Activated T-helper 2 cell treated with anti-CD3 and anti-CD28 coated beads, Interferon-gamma antibody, Interleukin-2, Interleukin-4, amounts not matched to agents 10 μg/mL and 5 μg/mL and 100 μg/mL, durations not matched to agents 14 hours and 24 hours and 36 hours (primary cell): ENCODE measurements at regions of chr1 and their contacts with region 1.

Region 1: DNA sequence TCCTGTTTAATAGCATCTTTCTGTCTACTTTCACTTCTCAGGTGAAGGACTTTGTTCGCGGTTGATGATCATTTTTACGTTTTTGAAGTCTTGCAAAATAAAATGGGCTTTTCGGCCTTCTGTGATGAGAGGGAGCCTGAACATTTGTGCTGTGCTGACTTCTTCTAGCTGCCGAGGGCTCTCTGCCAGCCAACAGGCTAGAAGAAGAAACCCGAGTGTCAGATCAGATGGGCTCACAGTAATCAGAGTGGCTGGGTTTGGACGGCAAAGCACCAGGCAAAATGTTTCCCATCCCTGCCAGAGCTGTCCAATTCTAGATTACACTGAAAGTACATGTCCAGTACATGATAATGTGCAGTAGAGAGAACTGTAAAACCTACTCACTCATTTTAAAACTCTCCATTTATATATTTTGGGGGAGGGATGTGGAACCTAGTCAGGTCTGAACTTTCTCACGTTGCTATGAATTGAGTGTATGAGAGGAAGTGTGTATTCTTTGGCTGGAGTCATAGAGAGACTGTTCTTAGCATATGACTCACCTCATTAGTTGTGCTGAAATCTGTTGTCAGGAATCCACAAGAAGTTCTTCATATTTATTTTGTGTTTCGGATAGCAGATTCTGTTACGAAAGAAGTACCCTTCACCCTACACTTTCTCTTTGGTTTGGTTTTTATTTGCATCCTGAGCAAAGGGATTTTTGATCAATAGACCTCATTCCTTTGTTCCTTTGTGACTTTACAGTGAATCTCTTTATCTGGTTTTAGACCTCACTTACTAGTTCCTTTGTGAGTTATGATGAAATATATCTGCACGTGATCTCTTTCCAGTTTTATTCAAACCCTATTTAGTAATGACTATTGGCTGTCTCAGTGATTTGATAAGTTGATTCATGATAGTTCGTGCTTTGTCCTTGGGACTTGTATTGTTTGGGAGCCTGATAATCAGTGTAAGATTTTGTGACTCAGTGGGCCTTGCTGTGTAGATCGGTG is 4.8 kb downstream of the ATP1A1 start:
- DNase-seq: peak; percentile 28
- H3K4me3 Mint-ChIP-seq: peak overlapping the region; percentile 78
- H3K27ac Mint-ChIP-seq: peak overlapping the region; percentile 75
- H3K4me1 Mint-ChIP-seq: peaks cover 66% of the 10 kb centered on the region
- H3K27me3 Mint-ChIP-seq: no peaks in the 10 kb centered on the region

Region 2: DNA sequence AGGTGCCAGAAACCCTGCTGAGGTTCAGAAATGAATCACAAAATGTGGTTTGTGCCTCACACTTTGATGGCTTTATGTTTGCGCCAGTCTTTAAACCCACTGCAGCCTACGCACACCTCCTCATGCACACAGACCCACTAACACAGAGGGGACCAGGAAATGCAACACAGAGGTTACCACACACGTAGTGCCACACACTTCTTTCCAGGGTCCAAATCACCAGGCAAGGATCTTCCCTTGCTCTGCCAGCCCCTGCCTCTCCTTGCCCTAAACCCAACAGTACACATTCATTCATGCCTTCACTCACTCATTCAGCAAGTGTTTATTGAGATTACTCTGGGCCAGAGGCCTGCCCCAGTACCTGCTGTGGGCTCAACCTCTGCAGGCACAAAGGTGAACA is 249.2 kb before region 1 on chr1:
- intact Hi-C with region 1: loop called (anchors 5 kb)
- DNase-seq: no peak
- H3K4me3 Mint-ChIP-seq: no peak overlapping the region
- H3K27ac Mint-ChIP-seq: peak overlapping the region; percentile 38
- H3K4me1 Mint-ChIP-seq: peaks cover 38% of the 10 kb centered on the region
- H3K27me3 Mint-ChIP-seq: peaks cover 17% of the 10 kb centered on the region

Region 3: DNA sequence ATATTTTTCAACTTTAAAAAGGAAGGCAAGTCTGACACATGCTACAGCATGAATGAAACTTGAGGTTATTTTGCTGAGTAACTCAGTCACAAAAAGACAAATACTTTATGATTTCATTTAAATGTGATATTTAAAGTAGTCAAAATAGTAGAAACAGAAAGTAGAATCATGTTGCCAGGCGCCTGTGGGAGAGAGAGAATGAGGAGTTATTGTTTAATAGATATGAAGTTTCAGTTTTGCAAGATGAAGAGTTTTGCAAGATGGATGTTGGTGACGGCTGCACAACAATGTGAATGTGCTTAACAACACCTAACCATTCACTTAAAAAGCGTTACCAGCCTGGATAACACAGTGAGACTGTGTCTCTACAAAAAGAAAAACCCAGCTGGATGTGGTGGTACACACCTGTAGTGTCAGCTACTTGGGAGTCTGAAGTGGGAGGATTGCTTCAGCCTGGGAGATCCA is 25.5 kb before region 1 on chr1:
- intact Hi-C with region 1: no loop called
- DNase-seq: no peak
- H3K4me3 Mint-ChIP-seq: no peak overlapping the region
- H3K27ac Mint-ChIP-seq: no peak overlapping the region
- H3K4me1 Mint-ChIP-seq: peaks cover 8% of the 10 kb centered on the region
- H3K27me3 Mint-ChIP-seq: peaks cover 2% of the 10 kb centered on the region

Region 4: DNA sequence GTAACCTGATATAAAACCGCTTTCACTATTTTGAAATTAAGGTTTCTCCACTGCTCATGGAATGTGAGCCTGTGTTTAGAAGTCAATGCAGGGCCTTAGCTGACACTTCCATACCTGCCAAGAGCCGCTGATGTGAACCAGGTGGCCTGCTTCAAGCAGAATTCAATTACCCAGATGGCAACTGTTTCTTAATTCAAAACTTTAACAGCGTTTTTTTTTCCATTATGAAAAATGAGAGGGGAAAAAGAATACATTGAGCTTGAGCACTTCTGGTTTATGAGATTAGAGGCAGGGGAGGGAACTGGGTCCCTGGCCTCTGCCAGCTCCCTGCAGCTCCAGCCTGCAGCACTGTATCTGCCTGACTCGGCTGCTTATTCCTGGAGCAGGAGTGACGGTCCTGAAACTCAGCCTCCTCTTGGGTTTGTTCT is 12.5 kb before region 1 on chr1:
- intact Hi-C with region 1: no loop called
- DNase-seq: no peak
- H3K4me3 Mint-ChIP-seq: no peak overlapping the region
- H3K27ac Mint-ChIP-seq: no peak overlapping the region
- H3K4me1 Mint-ChIP-seq: no peaks in the 10 kb centered on the region
- H3K27me3 Mint-ChIP-seq: peaks cover 31% of the 10 kb centered on the region

Region 5: GRCh38 chr1:116418091-116418830 is 40.4 kb after region 1 on chr1:
- intact Hi-C with region 1: loop called (anchors 1 kb)
- DNase-seq: peak; percentile 82
- H3K4me3 Mint-ChIP-seq: peak overlapping the region; percentile 88
- H3K27ac Mint-ChIP-seq: peak overlapping the region; percentile 82
- H3K4me1 Mint-ChIP-seq: peaks cover 38% of the 10 kb centered on the region
- H3K27me3 Mint-ChIP-seq: peaks cover 10% of the 10 kb centered on the region

Region 6: GRCh38 chr1:116514708-116515525 is 137.1 kb after region 1 on chr1:
- intact Hi-C with region 1: no loop called
- DNase-seq: peak; percentile 68
- H3K4me3 Mint-ChIP-seq: peak overlapping the region; percentile 50
- H3K27ac Mint-ChIP-seq: peak overlapping the region; percentile 94
- H3K4me1 Mint-ChIP-seq: peaks cover 63% of the 10 kb centered on the region
- H3K27me3 Mint-ChIP-seq: no peaks in the 10 kb centered on the region

Region 7: GRCh38 chr1:116556289-116557006 is 178.6 kb after region 1 on chr1:
- intact Hi-C with region 1: loop called (anchors 5 kb)
- DNase-seq: peak; percentile 63
- H3K4me3 Mint-ChIP-seq: peak overlapping the region; percentile 2
- H3K27ac Mint-ChIP-seq: peak overlapping the region; percentile 93
- H3K4me1 Mint-ChIP-seq: peaks cover 75% of the 10 kb centered on the region
- H3K27me3 Mint-ChIP-seq: no peaks in the 10 kb centered on the region

Region 8: GRCh38 chr1:116763787-116764465 is 386.1 kb after region 1 on chr1:
- intact Hi-C with region 1: loop called (anchors 5 kb)
- DNase-seq: no peak
- H3K4me3 Mint-ChIP-seq: peak overlapping the region; percentile 84
- H3K27ac Mint-ChIP-seq: peak overlapping the region; percentile 100
- H3K4me1 Mint-ChIP-seq: peaks cover 88% of the 10 kb centered on the region
- H3K27me3 Mint-ChIP-seq: no peaks in the 10 kb centered on the region